ENCODE measurements at regions of chr18 and their contacts with region 1.

Region 1: DNA sequence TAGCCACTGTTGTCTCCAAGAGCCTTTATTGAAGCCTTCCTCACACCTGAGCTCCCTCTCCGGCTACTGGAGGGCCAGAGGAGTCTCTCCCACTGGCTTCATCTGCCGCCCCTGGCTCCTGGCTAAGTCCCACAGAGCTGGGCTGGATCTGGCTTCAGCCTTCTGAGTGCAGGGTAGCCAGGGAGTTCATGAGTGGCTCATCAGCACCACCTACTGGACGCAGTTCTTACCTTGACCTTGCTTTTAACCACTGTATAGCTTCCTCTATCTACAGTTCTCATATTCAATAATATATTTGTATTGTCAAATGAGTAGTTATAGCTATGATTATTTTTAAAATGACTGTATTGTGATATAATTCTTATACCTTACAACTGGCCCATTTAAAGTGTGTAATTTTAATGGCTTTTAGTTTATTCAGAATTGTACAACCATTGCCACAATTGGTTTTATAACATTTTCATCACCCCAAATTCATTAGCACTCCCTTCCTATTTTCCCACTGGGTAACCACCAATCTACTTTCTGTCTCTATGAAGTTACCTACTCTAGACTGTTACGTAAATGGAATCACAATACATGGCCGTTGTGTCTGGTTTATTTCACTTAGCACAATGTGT is 17.7 kb downstream of the CNDP1 start:
- DNase-seq: peak; percentile 51
- ATAC-seq: peak; percentile 100
- H3K4me3 ChIP-seq: no peak overlapping the region
- H3K27ac ChIP-seq: no peak overlapping the region
- H3K4me1 ChIP-seq: 0 out of 2 replicates have a peak, but pooled peaks cover 4% of the 10 kb centered on the region
- H3K27me3 ChIP-seq: no peaks in the 10 kb centered on the region; a peak in 1 of 4 replicates
- CTCF ChIP-seq: peak; percentile 76 to 92 (median 76); a peak in 5 of 6 replicates
- EP300 ChIP-seq: no peak
- POLR2A ChIP-seq: no peak
- RAD21 ChIP-seq: peak; percentile 86

Region 2: DNA sequence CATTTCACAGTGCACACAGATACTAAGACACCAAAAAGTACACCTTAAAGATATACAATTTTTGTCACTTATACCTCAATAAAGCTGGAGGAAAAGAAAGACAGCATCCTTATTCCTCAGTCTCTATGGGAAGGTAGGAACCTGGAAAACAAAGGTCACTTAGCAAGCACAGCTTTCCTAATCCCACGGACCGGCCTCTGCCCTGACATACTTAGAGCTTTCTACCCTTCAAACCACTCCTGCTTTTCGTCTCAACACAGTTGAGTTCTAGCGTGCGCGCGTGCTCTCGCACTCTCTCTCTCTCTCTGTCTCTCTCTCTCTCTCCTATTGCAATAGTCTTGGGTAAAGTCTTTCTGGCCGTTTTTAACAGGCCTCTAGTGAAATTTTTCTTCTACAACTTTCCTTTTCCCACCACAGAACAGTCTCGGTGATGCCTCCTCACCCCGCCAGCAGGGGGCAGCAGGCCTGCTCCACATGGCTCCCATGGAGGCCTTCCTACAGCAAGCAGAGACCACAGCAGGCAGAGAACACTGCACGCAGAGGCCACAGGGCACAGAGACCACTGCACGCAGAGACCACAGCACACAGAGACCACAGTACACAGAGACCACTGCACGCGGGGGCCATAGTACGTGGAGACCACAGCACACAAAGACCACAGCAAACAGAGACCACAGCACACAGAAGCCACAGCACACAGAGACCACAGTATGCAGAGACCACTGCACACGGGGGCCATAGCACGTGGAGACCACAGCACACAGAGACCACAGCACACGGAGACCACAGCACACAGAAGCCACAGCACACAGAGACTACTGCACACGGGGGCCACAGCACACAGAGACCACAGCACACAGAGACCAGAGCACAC is 511.4 kb before region 1 on chr18:
- CTCF ChIA-PET with region 1: interaction called, 6 read pairs
- POLR2A ChIA-PET with region 1: no interaction called
- RAD21 ChIA-PET with region 1: no interaction called
- SMC1A ChIA-PET with region 1: interaction called, 3 read pairs
- in situ Hi-C with region 1: no loop called
- intact Hi-C with region 1: loop called (anchors 5 kb)
- DNase-seq: no peak
- ATAC-seq: peak; percentile 97
- H3K4me3 ChIP-seq: no peak overlapping the region
- H3K27ac ChIP-seq: no peak overlapping the region
- H3K4me1 ChIP-seq: no peaks in the 10 kb centered on the region
- H3K27me3 ChIP-seq: no peaks in the 10 kb centered on the region; a peak in 1 of 4 replicates
- CTCF ChIP-seq: peak; percentile 62 to 77 (median 73)
- EP300 ChIP-seq: no peak
- POLR2A ChIP-seq: no peak
- RAD21 ChIP-seq: peak; percentile 61

Region 3: DNA sequence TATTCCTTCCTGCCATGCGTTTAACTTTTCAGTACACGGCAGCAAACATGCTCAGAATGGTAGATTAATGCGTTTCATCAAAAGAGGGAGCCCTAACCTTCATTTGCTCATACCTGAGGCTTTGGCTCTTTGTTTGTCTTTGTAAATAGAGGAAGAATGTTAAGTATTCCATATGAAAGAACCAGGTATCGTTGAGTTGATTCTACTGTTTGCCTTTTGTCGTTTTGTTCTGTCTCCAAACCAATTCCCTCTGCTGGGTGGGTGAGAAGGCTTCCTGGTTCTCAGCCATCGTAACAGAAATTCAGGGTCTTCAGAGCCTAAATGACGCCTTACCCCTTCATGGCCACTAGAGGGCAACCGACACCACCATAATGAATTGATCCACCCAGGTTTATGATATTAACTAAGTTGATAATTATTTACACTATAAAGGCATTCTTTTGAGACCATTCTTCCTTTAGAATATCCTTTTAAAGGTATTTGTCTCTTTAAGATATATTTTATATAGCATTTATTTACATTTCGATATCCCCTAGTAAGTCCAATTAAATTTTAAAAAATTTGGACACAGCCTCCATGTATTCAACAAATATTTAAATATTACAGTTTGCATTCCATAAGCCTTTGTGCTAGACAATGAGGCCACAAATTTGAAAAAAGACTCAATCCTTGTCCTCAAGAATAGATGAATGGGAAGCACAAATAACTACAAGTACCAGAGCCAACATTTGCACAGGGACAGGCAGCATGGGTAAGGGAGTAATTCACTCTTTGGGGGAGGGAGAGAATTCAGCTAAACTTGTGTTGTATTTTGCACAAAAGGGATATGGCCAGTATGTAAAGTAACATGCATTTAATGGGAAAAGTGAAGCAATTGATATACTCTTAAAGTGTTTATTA is 355.6 kb before region 1 on chr18:
- CTCF ChIA-PET with region 1: interaction called, 22 read pairs
- POLR2A ChIA-PET with region 1: no interaction called
- RAD21 ChIA-PET with region 1: interaction called, 8 read pairs
- SMC1A ChIA-PET with region 1: interaction called, 7 read pairs
- in situ Hi-C with region 1: loop called (anchors 5 kb)
- intact Hi-C with region 1: loop called (anchors 1 kb)
- DNase-seq: peak; percentile 36
- ATAC-seq: peak; percentile 93
- H3K4me3 ChIP-seq: no peak overlapping the region
- H3K27ac ChIP-seq: no peak overlapping the region
- H3K4me1 ChIP-seq: no peaks in the 10 kb centered on the region
- H3K27me3 ChIP-seq: peaks cover 0 to 3% of the 10 kb centered on the region in 2 experiments; a peak in 1 of 4 replicates
- CTCF ChIP-seq: peak; percentile 65 to 85 (median 67)
- EP300 ChIP-seq: no peak
- POLR2A ChIP-seq: no peak
- RAD21 ChIP-seq: peak; percentile 89

Region 4: GRCh38 chr18:74353169-74353775 is 198.8 kb before region 1 on chr18:
- CTCF ChIA-PET with region 1: interaction called, 42 read pairs
- POLR2A ChIA-PET with region 1: no interaction called
- RAD21 ChIA-PET with region 1: interaction called, 12 read pairs
- SMC1A ChIA-PET with region 1: interaction called, 22 read pairs
- in situ Hi-C with region 1: loop called (anchors 5 kb)
- intact Hi-C with region 1: loop called (anchors 1 kb)
- DNase-seq: peak; percentile 24
- ATAC-seq: peak; percentile 88
- H3K4me3 ChIP-seq: no peak overlapping the region
- H3K27ac ChIP-seq: no peak overlapping the region
- H3K4me1 ChIP-seq: peaks cover 3% of the 10 kb centered on the region; the same call in 1 of the 2 replicates
- H3K27me3 ChIP-seq: peaks cover 0 to 2% of the 10 kb centered on the region in 2 experiments; a peak in 1 of 4 replicates
- CTCF ChIP-seq: peak; percentile 67 to 72 (median 71); a peak in 5 of 6 replicates
- EP300 ChIP-seq: no peak
- POLR2A ChIP-seq: no peak
- RAD21 ChIP-seq: peak; percentile 83

Region 5: GRCh38 chr18:74563999-74564398 is 12.0 kb after region 1 on chr18:
- CTCF ChIA-PET with region 1: interaction called, 13 read pairs
- POLR2A ChIA-PET with region 1: interaction called, 3 read pairs
- RAD21 ChIA-PET with region 1: no interaction called
- SMC1A ChIA-PET with region 1: interaction called, 3 read pairs
- in situ Hi-C with region 1: no loop called
- intact Hi-C with region 1: no loop called
- DNase-seq: no peak
- ATAC-seq: no peak
- H3K4me3 ChIP-seq: no peak overlapping the region
- H3K27ac ChIP-seq: no peak overlapping the region
- H3K4me1 ChIP-seq: no peaks in the 10 kb centered on the region
- H3K27me3 ChIP-seq: no peaks in the 10 kb centered on the region; a peak in 2 of 4 replicates
- CTCF ChIP-seq: no peak
- EP300 ChIP-seq: no peak
- POLR2A ChIP-seq: no peak
- RAD21 ChIP-seq: no peak

Region 6: GRCh38 chr18:74574916-74575315 is 22.9 kb after region 1 on chr18:
- CTCF ChIA-PET with region 1: no interaction called
- POLR2A ChIA-PET with region 1: no interaction called
- RAD21 ChIA-PET with region 1: no interaction called
- SMC1A ChIA-PET with region 1: no interaction called
- in situ Hi-C with region 1: no loop called
- intact Hi-C with region 1: no loop called
- DNase-seq: no peak
- ATAC-seq: no peak
- H3K4me3 ChIP-seq: no peak overlapping the region
- H3K27ac ChIP-seq: no peak overlapping the region
- H3K4me1 ChIP-seq: no peaks in the 10 kb centered on the region
- H3K27me3 ChIP-seq: peaks cover 0 to 1% of the 10 kb centered on the region in 2 experiments; a peak in 2 of 4 replicates
- CTCF ChIP-seq: no peak
- EP300 ChIP-seq: no peak
- POLR2A ChIP-seq: no peak
- RAD21 ChIP-seq: no peak